Heart right ventricle (tissue), 16 donors: ENCODE measurements at regions of chr22 and their contacts with region 1.

Region 1: GRCh38 chr22:25702040-25702439 is 39.9 kb upstream of the MYO18B start:
- DNase-seq: no peak
- ATAC-seq: peak in 5 of 8 donors; percentile 46 to 76 (median 53)
- H3K4me3 ChIP-seq: no peak overlapping the region
- H3K27ac ChIP-seq: peak overlapping the region in 2 of 10 donors; percentile 37 to 51
- H3K4me1 ChIP-seq: peaks cover 0 to 31% (median 16%) of the 10 kb centered on the region in 9 donors
- H3K27me3 ChIP-seq: no peaks in the 10 kb centered on the region
- CTCF ChIP-seq: peak in 8 of 9 donors; percentile 23 to 70 (median 52)

Region 2: DNA sequence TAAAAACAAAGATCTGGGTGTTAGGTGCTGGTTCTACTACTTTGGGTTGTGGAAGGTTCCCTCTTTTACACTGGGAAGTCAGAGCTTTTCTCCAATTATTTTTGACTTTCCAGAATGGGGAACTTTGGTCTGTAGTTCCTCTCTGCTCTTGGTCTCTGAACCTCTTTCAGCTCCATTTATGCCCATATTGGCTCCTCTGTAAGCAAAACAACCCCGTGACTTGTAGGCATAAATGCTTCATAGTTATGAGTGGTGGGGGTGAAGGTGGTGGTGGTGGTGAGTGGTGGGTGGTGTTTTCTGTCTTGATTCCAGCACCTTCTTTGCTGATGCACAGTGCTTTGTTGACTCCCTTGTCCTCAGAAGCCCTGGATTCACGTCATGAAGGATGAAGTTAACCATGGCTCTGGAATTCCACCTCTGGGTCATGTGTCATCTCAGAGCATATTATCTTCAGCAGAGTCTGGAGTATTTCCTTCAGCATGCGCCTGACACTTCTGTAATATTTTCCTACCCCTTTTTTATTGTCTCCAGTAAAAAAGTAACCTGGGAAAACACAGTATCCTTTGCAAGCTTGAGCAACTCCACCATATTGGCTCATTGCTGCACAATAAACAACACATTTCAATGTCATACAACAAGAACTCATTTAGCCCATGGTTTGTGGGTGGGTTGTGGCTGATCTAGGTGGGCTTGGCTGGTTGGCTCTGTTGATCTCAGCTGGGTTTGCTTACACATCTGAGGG is 161.7 kb before region 1 on chr22:
- intact Hi-C with region 1: loop called in 5 of 10 experiments (anchors 5 to 10 kb)
- DNase-seq: no peak
- ATAC-seq: no peak
- H3K4me3 ChIP-seq: no peak overlapping the region
- H3K27ac ChIP-seq: peak overlapping the region in 1 of 10 donors; percentile 21
- H3K4me1 ChIP-seq: peaks cover 0 to 27% (median 10%) of the 10 kb centered on the region in 9 donors
- H3K27me3 ChIP-seq: no peaks in the 10 kb centered on the region
- CTCF ChIP-seq: no peak

Region 3: GRCh38 chr22:25898689-25899365 is 196.8 kb after region 1 on chr22:
- intact Hi-C with region 1: no loop called
- DNase-seq: no peak
- ATAC-seq: no peak
- H3K4me3 ChIP-seq: no peak overlapping the region
- H3K27ac ChIP-seq: peak overlapping the region in 3 of 10 donors; percentile 19 to 39 (median 36)
- H3K4me1 ChIP-seq: peaks cover 0 to 15% (median 0%) of the 10 kb centered on the region in 9 donors
- H3K27me3 ChIP-seq: peaks cover 0 to 6% (median 0%) of the 10 kb centered on the region in 7 donors
- CTCF ChIP-seq: peak in 5 of 9 donors; percentile 15 to 23 (median 20)